Heart left ventricle (tissue), 16 donors: ENCODE measurements at regions of chr7 and their contacts with region 1.

Region 1: GRCh38 chr7:83732305-83732704 is 83.4 kb upstream of the SEMA3E start:
- DNase-seq: no peak
- ATAC-seq: no peak
- H3K4me3 ChIP-seq: no peak overlapping the region
- H3K27ac ChIP-seq: no peak overlapping the region
- H3K4me1 ChIP-seq: no peaks in the 10 kb centered on the region
- H3K27me3 ChIP-seq: no peaks in the 10 kb centered on the region
- CTCF ChIP-seq: no peak
- POLR2A ChIP-seq: no peak

Region 2: GRCh38 chr7:83677180-83677866 is 55.0 kb before region 1 on chr7:
- intact Hi-C with region 1: loop called in 1 of 10 experiments (anchors 10 kb)
- DNase-seq: peak in 2 of 5 donors; percentile 31 to 35
- ATAC-seq: peak in 3 of 4 donors; percentile 39 to 84 (median 48)
- H3K4me3 ChIP-seq: no peak overlapping the region
- H3K27ac ChIP-seq: no peak overlapping the region
- H3K4me1 ChIP-seq: no peaks in the 10 kb centered on the region
- H3K27me3 ChIP-seq: no peaks in the 10 kb centered on the region
- CTCF ChIP-seq: no peak
- POLR2A ChIP-seq: no peak